ENCODE measurements at regions of chr11 and their contacts with region 1.

Region 1: DNA sequence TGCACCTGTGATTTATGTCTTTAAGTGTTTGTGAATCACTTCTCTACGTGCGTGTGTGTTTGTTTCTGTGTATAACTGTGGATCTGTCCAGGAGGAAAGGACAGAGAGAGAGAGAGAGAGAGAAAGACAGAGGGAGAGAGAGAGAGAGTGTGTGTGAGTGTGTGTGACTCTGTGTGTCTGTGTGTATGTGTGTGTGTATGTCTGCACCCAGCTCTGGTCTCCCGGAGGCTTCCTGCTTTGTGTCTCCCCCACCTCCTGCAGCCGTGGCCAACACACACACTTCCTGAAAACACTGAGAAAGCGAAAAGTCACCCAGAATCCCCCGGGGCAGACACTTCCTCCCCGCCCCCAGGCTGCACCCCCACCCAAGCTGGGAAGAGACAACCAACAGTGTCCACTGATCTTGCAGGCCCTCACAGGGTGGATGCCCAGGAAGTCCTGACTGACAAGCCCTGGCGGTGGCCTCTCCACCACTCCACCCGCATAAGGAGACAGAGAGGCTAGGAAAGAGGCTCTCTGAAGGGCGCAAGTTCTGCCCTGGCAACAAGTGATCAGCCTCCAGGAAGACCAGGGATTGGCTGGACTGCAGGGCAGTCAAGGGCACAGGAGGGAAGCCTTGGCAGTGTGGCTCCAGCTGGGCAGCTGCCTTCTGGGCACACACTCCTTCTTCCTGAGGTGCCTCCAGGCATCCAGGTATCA is 30.0 kb downstream of the ARAP1 start:
- DNase-seq: peak; percentile 84 to 94
- ATAC-seq: peak; percentile 76 to 88 (median 82)
- H3K4me3 ChIP-seq: peak overlapping the region; percentile 62 to 88 (median 72)
- H3K27ac ChIP-seq: peak overlapping the region; percentile 87 to 99 (median 93)
- H3K4me1 ChIP-seq: peaks cover 23 to 84% (median 62%) of the 10 kb centered on the region in 9 donors
- H3K27me3 ChIP-seq: no peaks in the 10 kb centered on the region
- CTCF ChIP-seq: no peak

Region 2: GRCh38 chr11:72793425-72794367 is 71.5 kb after region 1 on chr11 and contains the start of gene STARD10:
- intact Hi-C with region 1: loop called (anchors 1 to 10 kb)
- DNase-seq: peak; percentile 96 to 97
- ATAC-seq: peak; percentile 95 to 98 (median 97)
- H3K4me3 ChIP-seq: peak within 1 kb of the TSS; percentile 51 to 78 (median 68)
- H3K27ac ChIP-seq: peak within 1 kb of the TSS; percentile 83 to 96 (median 90)
- H3K4me1 ChIP-seq: peaks cover 7 to 37% (median 34%) of the 10 kb centered on the region in 9 donors
- H3K27me3 ChIP-seq: no peaks in the 10 kb centered on the region
- CTCF ChIP-seq: peak; percentile 94 to 100 (median 98)
- total RNA-seq, gene STARD10: 36.1 to 97.9 (median 51.3) TPM

Region 3: DNA sequence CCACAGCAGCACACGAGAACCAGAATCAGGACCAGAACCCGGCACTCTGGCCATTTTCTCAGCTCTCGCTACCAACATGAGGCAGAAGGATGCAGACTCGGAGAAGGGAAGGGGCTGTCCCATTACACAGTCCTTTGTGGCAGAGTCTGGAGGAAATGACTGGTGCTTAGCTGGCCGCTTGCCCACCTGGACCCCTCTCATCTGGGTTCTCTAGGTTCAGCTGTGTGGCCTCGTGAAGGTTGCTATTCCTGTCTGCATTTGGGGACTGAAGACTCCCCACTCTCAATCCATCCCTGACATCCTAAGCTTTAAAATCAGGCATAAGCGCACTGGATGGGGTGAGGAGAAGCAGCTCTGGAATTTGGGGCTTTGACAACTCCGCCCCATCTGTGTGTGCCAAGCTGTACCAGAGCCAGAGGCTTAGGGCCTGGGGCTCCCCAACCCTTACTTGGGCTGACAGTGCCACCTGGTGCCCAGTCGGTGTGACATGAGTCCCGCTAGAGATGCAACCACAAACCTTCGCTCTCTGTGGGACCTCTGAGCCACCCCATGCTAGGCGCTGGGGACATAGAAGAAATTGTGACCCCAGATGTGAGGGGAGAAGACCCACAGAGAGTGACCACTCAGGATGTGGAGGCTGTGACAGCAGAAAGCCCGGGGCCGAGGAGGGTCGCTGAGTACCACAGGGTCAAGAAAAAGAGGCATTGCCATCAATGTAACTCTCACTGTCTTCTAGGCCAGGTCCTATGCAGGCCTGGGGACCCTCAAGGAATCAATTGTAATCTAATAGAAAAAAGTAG is 455.8 kb after region 1 on chr11:
- intact Hi-C with region 1: loop called in 8 of 10 experiments (anchors 2 to 5 kb)
- DNase-seq: peak; percentile 85 to 88
- ATAC-seq: peak; percentile 60 to 86 (median 74)
- H3K4me3 ChIP-seq: no peak overlapping the region
- H3K27ac ChIP-seq: peak overlapping the region; percentile 69 to 92 (median 86)
- H3K4me1 ChIP-seq: peaks cover 27 to 74% (median 51%) of the 10 kb centered on the region in 9 donors
- H3K27me3 ChIP-seq: no peaks in the 10 kb centered on the region
- CTCF ChIP-seq: peak; percentile 71 to 94 (median 86)

Region 4: GRCh38 chr11:73242251-73243079 is 520.3 kb after region 1 on chr11:
- intact Hi-C with region 1: loop called in 2 of 10 experiments (anchors 5 kb)
- DNase-seq: peak; percentile 61 to 82
- ATAC-seq: peak; percentile 28 to 68 (median 56)
- H3K4me3 ChIP-seq: peak overlapping the region in 5 of 10 donors; percentile 16 to 45 (median 29)
- H3K27ac ChIP-seq: peak overlapping the region in 5 of 10 donors; percentile 45 to 86 (median 76)
- H3K4me1 ChIP-seq: peaks cover 23 to 56% (median 54%) of the 10 kb centered on the region in 9 donors
- H3K27me3 ChIP-seq: no peaks in the 10 kb centered on the region
- CTCF ChIP-seq: peak; percentile 73 to 98 (median 89)